ENCODE measurements at regions of chr4 and their contacts with region 1.

Region 1: DNA sequence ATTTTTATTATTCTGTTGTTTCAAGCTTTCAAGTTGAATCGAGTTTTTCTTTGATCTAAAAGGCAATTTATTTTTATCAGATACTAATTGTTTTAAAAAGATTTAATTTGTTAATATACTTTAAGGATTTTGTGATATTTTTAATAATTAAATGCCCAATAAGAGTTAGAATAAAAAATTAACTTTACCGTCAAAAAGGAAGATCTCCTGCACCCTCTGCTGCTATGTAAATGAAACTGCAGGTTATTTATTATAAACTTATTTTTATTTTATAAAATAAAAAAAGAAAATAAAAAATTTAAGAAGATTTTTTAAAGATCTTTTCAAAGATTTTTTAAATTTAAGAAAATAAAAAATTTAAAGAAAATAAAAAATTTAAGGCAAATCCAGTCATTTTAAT is 166.1 kb downstream of the CCSER1 start:
- DNase-seq: no peak
- ATAC-seq: no peak
- H3K4me3 ChIP-seq: no peak overlapping the region
- H3K27ac ChIP-seq: no peak overlapping the region
- H3K4me1 ChIP-seq: no peaks in the 10 kb centered on the region
- H3K27me3 ChIP-seq: no peaks in the 10 kb centered on the region
- CTCF ChIP-seq: peak in 8 of 9 donors; percentile 26 to 73 (median 64)

Region 2: DNA sequence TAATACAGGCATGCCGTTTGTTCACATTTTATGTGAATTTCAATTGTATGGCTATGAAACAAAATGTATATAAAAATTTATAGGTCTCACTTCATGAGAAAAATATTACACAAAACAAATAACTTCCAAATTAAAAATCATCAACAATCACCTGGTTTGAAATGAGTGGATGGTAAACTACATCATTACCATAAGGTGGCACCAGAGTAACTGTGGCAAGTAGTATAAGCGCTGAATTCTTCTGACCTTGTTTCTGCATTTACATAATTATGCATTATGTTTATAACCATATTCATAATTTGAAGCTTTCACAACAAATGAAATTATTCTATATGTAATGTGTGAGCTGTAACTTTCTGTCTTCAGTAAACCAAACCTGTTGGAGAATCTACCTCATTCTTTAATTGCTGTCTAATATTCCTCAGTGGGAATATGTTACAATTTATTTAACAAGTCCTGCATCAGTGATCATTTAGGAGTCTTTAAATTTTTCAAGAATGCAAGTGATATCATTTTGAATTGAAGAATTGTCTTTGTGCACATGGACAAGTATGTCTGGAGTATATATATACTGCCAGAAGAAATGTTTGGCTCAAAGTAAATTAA is 343.4 kb before region 1 on chr4:
- intact Hi-C with region 1: loop called in 1 of 10 experiments (anchors 10 kb)
- DNase-seq: no peak
- ATAC-seq: no peak
- H3K4me3 ChIP-seq: no peak overlapping the region
- H3K27ac ChIP-seq: no peak overlapping the region
- H3K4me1 ChIP-seq: no peaks in the 10 kb centered on the region
- H3K27me3 ChIP-seq: peaks cover 0 to 3% (median 0%) of the 10 kb centered on the region in 7 donors
- CTCF ChIP-seq: peak in 6 of 9 donors; percentile 22 to 40 (median 29)

Region 3: DNA sequence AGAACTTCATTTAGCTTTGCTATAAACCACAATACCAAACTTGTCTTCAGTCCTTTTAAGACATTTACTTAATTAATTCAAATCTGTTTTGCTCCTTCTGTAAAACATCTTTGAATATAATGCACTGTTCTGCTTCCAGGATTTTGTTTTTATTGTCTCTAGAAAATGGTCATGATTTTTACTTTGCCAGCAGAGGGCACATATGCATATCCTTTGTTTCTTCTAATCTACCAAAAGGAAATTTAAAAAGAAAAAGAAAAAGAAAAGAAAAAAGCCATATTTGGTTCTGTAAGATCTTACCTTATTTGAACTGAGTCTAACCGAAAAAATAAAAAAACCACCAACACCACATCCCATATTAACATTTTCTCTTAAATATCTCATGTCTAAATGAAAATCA is 268.1 kb before region 1 on chr4:
- intact Hi-C with region 1: loop called in 2 of 10 experiments (anchors 10 kb)
- DNase-seq: no peak
- ATAC-seq: no peak
- H3K4me3 ChIP-seq: no peak overlapping the region
- H3K27ac ChIP-seq: no peak overlapping the region
- H3K4me1 ChIP-seq: no peaks in the 10 kb centered on the region
- H3K27me3 ChIP-seq: no peaks in the 10 kb centered on the region
- CTCF ChIP-seq: peak in 4 of 9 donors; percentile 15 to 34 (median 22)

Region 4: GRCh38 chr4:90118527-90119195 is 174.7 kb before region 1 on chr4:
- intact Hi-C with region 1: loop called in 7 of 10 experiments (anchors 2 to 10 kb)
- DNase-seq: no peak
- ATAC-seq: no peak
- H3K4me3 ChIP-seq: no peak overlapping the region
- H3K27ac ChIP-seq: no peak overlapping the region
- H3K4me1 ChIP-seq: no peaks in the 10 kb centered on the region
- H3K27me3 ChIP-seq: no peaks in the 10 kb centered on the region
- CTCF ChIP-seq: no peak

Region 5: DNA sequence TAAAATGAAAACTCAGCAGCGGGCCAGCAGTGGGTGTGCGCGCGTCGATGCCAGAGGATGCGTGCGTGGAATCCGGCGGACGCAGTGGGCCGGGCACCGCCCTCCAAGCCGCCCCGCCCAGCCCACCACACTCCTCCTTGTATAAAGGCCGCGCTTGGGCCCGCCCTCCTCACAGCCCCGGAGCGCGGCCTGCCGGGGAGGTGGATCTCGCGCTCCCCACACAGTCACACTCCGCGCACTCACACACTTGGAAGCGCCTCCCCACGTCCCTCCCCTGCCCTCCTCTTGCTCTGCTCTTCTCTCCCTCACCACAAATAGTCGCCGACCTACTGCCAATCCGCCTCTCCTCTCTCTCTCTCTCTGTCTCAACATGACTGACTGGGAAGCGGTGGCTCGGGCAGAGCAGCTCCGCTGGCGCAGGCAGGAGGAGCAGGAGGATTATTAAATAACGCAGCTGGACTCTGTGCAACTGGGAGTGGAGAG is 166.1 kb before region 1 on chr4 and contains the start of gene CCSER1:
- intact Hi-C with region 1: loop called in 7 of 10 experiments (anchors 5 to 10 kb)
- DNase-seq: peak; percentile 76 to 79
- ATAC-seq: peak; percentile 91 to 99 (median 97)
- H3K4me3 ChIP-seq: peak within 1 kb of the TSS; percentile 50 to 77 (median 70)
- H3K27ac ChIP-seq: peak within 1 kb of the TSS; percentile 55 to 84 (median 76)
- H3K4me1 ChIP-seq: peaks cover 0 to 19% (median 7%) of the 10 kb centered on the region in 9 donors
- H3K27me3 ChIP-seq: peaks cover 0 to 20% (median 0%) of the 10 kb centered on the region in 7 donors
- CTCF ChIP-seq: no peak
- total RNA-seq, gene CCSER1: 9.9 to 16.4 (median 12.5) TPM